Left ventricle myocardium superior (tissue), 1 donor: ENCODE measurements at regions of chr1 and their contacts with region 1.

Region 1: GRCh38 chr1:170765712-170766330 is 101.9 kb downstream of the PRRX1 start:
- DNase-seq: no peak
- ATAC-seq: peak; percentile 68

Region 2: DNA sequence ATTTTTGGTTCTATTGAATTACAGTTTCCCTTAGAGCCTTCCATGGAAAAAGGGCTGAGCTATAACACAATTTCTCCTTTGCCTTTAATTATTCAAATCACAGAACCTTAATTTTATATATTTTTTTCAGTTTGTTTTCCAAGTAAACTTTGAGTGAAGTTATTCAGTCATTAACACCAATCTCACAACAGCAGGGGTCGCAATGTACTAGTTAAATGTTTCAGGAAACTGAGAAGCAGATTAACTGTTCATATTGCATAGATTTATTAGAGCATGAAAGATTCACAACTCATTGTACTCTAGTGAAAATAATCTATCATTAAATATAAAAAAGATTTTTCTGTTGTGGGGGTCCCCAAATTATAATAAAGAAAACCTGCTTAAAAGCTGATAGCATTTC is 755.4 kb before region 1 on chr1:
- intact Hi-C with region 1: loop called (anchors 10 kb)
- DNase-seq: no peak
- ATAC-seq: no peak

Region 3: DNA sequence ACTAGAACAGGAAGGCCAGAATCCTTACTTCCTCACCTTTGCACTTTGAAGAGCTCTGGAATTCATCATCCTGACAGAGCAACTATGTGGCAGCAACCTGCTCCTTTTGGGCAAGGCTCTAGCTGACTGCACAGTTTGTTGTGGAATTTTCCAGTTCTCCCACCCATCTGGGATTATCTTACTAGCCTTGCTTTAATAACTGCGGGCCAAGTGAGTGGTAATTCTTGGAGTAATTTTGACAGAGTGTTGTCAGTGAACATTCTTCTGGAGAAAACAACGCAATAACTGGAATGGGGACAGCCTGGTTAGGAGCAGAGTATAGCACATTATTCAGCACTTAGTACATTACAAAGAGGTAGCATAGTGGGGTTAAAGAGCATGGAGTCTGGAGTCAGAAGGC is 544.8 kb before region 1 on chr1:
- intact Hi-C with region 1: no loop called
- DNase-seq: no peak
- ATAC-seq: peak; percentile 85